Mammary epithelial cell (primary cell): ENCODE measurements at regions of chr3 and their contacts with region 1.

Region 1: GRCh38 chr3:184561061-184561912 is at the start of gene EPHB3:
- DNase-seq: peak; percentile 99
- H3K4me3 ChIP-seq: peak within 1 kb of the TSS; percentile 67 to 92 (median 69)
- H3K27ac ChIP-seq: peak within 1 kb of the TSS; percentile 41
- H3K4me1 ChIP-seq: peaks cover 40% of the 10 kb centered on the region
- H3K27me3 ChIP-seq: no peaks in the 10 kb centered on the region
- CTCF ChIP-seq: peak; percentile 99 to 100
- total RNA-seq, gene EPHB3: 17.6 to 45.2 TPM

Region 2: GRCh38 chr3:184469423-184469822 is 91.9 kb before region 1 on chr3:
- CTCF ChIA-PET with region 1: no interaction called
- dilution Hi-C with region 1: no loop called
- in situ Hi-C with region 1: no loop called
- intact Hi-C with region 1: no loop called
- DNase-seq: peak; percentile 35
- H3K4me3 ChIP-seq: no peak overlapping the region
- H3K27ac ChIP-seq: no peak overlapping the region
- H3K4me1 ChIP-seq: peaks cover 10% of the 10 kb centered on the region
- H3K27me3 ChIP-seq: no peaks in the 10 kb centered on the region
- CTCF ChIP-seq: peak; percentile 84 to 97

Region 3: DNA sequence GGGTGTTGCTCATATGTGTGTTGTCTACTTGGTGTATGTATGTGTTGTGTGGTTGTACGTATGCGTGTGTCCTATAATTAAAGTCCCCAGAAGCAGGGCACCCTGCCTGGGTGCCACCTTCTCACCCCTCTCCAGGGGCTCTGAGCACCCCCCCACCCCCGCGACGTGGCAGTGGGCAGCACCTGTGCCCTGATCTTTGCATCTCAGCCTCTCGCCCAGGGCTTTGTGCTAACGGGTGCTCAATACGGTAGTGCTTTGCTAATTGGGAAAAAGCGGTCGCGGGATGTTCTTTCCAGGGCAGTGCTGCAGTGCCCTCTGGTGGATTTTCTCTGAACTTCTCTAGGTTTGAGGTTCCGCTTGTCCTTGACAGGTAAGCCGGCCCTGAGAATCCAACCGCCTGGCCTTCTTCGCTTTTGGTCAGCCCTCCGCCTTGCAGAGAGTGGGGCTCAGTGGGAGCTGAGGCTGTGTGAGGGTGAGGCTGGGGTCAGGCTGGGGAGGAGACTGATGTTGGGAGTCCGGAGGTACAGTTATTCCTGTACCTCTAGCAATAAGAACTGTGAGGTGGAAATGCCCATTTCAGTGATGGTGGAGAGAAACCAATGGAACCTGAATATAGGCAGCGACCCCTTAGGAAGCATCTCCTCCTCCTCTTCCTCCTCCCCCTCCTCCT is 17.3 kb before region 1 on chr3:
- CTCF ChIA-PET with region 1: interaction called, 11 read pairs
- dilution Hi-C with region 1: no loop called
- in situ Hi-C with region 1: no loop called
- intact Hi-C with region 1: no loop called
- DNase-seq: peak; percentile 72
- H3K4me3 ChIP-seq: no peak overlapping the region
- H3K27ac ChIP-seq: no peak overlapping the region
- H3K4me1 ChIP-seq: peaks cover 2% of the 10 kb centered on the region
- H3K27me3 ChIP-seq: no peaks in the 10 kb centered on the region
- CTCF ChIP-seq: peak; percentile 84 to 86

Region 4: DNA sequence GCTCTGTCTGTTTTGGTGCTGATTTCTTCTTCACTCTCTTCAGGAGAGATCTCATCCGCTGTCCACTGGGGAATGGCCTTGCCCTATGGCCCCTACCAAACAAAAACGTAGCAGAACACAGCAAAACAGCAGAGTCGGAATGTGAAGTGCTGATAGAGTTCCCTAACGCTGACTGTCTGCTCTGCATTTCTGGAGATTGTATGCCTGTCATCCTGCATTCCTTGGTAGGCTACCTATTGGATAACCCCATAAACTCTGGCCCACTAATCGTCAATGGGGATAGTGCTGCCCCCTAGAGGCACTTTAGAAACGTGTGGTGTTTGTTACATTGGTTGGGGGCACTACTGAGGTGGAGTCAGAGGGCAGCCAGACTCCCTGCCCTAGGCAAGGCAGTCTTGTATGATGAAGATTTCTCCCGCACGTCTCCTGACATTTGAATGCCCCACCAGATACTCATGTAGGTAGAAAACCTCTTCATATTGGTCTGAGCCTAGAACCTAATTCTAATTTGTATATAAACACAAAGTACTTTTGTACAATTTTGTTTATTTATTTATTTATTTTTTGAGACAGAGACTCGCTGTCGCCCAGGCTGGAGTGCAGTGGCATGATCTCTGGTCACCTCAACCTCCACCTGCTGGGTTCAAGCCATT is 166.2 kb after region 1 on chr3:
- CTCF ChIA-PET with region 1: interaction called, 13 read pairs
- dilution Hi-C with region 1: no loop called
- in situ Hi-C with region 1: no loop called
- intact Hi-C with region 1: loop called (anchors 1 kb)
- DNase-seq: peak; percentile 82
- H3K4me3 ChIP-seq: no peak overlapping the region
- H3K27ac ChIP-seq: peak overlapping the region; percentile 21
- H3K4me1 ChIP-seq: peaks cover 18% of the 10 kb centered on the region
- H3K27me3 ChIP-seq: no peaks in the 10 kb centered on the region
- CTCF ChIP-seq: peak; percentile 79 to 85

Region 5: DNA sequence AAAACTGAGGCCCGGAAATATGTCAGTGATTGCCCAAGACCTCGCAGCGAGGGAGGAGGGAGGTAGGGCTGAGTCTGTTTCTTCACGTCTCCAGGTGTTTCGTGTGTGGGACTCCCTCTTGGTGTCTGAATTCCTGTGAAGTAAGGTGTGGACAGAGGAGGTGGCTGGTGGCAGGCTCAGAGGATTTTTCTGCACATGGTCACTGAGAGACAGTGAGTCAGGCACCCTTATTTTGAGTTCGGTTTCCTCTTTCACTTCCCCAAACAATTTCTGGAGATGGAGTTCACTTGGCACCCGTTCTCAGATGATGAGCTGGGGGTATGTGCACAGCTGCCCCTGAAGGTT is 204.4 kb after region 1 on chr3:
- CTCF ChIA-PET with region 1: interaction called, 5 read pairs
- dilution Hi-C with region 1: no loop called
- in situ Hi-C with region 1: no loop called
- intact Hi-C with region 1: loop called (anchors 1 kb)
- DNase-seq: peak; percentile 95
- H3K4me3 ChIP-seq: no peak overlapping the region
- H3K27ac ChIP-seq: peak overlapping the region; percentile 99
- H3K4me1 ChIP-seq: peaks cover 26% of the 10 kb centered on the region
- H3K27me3 ChIP-seq: no peaks in the 10 kb centered on the region
- CTCF ChIP-seq: no peak

Region 6: DNA sequence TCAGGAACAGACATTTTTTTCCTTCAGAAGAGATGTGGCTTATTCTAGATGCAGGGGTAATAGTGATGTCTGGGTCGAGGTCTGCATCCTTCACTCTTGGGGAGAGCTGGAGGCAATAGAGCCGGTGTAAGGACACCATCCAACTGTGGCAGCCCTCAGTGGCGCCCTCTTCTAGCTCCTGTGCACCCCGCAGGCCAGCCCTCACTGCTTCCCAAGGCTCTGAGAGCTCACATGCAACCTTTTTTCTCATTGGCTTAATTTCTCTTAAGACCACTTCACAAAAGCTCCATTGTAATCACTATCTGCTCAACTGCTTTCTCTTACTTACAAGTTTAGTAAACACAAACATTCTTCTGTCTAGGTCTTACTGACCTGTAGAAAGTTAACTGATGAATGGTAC is 246.7 kb after region 1 on chr3:
- CTCF ChIA-PET with region 1: interaction called, 3 read pairs
- dilution Hi-C with region 1: no loop called
- in situ Hi-C with region 1: no loop called
- intact Hi-C with region 1: loop called (anchors 1 kb)
- DNase-seq: no peak
- H3K4me3 ChIP-seq: no peak overlapping the region
- H3K27ac ChIP-seq: no peak overlapping the region
- H3K4me1 ChIP-seq: peaks cover 5% of the 10 kb centered on the region
- H3K27me3 ChIP-seq: no peaks in the 10 kb centered on the region
- CTCF ChIP-seq: peak in 1 of 2 donors; percentile 19